ENCODE measurements at regions of chr17 and their contacts with region 1.

Region 1: GRCh38 chr17:50841949-50842354 is 6.6 kb downstream of the WFIKKN2 start:
- DNase-seq: peak; percentile 89

Region 2: DNA sequence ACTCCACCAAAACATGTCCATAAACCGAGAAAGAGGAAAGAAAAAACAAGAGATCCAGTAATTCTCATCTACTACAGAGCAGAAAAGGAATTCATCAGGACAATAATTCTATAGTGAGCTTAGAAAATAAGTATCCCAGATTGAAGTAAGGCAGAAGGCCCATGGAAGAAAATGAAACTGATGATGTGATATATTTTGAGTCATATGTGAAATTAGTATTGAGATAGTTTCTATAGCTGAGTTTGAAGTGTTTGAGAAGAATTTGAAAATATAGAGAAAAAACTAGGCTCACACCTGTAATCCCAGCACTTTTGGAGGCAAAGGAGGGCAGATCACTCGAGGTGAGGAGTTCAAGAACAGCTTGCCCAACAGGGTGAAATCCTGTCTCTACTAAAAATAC is 102.9 kb before region 1 on chr17:
- intact Hi-C with region 1: no loop called
- DNase-seq: no peak

Region 3: DNA sequence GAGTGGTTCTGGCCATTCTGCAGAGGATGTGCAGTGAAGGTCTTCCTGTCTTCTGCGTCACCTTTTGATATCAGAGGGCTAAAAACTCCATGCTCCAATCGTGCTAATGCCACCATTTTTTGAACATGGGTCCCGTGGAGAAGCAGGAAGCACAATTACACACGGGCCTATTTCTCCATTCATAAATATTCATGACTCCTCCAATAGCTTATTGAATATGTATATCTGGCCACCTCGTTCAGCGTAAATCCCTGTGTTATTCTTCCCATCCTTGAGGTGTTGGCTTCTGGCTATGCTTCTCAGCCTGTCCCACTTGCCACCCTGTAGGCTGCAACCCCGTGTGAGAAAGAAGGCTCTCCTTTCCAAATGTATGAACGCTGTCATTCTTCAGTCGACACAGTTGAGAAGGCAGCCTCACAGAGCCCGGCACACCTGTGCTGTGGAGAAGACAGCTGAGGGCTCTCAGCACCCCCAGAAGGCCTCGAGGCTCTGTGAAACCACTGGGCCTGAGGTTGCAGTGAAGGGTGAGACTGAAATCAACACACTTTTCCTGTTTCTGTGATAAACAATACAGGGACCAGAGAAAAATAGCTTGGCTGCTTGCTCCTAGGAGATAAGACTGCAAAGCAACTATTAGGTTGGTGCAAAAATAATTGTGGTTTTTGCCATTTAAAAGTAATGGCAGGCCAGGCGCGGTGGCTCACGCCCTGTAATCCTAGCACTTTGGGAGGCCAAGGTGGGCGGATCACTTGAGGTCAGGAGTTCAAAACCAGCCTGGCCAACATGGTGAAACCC is 69.8 kb before region 1 on chr17:
- intact Hi-C with region 1: no loop called
- DNase-seq: peak; percentile 52

Region 4: GRCh38 chr17:50783193-50783660 is 58.7 kb before region 1 on chr17:
- intact Hi-C with region 1: loop called (anchors 2 to 5 kb)
- DNase-seq: peak; percentile 95

Region 5: DNA sequence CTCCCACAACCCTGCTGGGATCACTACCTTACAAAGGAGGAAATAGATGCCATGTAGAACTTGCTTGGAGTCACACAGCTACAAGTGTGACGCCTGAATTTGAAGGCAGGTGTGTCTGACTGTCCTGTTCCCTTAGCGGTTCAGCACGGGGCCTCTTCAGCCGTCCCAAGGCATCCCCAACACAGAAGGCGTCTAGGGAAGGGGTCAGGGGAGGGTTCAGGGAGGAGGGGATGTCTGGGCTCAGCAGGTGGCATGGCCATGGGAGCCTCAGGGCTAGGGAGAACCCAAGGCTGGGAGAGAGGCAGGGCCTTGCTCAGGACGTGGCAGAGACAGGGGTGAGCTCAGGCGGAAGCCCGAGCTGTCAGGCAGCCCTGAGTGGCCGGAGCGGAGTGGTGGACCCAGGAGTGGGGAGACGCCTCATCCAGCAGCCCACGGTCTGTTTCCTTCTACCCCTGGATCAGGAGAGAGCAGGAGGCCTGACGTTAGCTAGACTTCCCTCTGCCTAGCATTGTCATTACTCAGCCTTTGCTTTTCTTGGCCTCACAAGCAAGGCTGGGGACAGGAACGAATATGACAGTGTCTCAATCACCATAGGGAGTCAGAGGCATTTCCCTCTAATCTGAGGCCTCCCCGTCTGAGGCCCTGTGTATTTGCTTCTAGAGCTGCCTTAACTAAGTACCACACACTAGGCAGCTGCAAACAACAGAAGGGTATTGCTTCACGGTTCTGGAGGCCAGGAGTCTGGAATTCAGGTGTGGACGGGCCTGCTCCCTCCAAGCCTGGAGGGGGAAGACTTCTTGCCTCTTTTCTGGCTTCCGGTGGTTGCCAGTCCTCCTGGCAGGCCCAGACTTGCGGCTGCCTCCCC is 43.3 kb before region 1 on chr17:
- intact Hi-C with region 1: no loop called
- DNase-seq: no peak

Region 6: DNA sequence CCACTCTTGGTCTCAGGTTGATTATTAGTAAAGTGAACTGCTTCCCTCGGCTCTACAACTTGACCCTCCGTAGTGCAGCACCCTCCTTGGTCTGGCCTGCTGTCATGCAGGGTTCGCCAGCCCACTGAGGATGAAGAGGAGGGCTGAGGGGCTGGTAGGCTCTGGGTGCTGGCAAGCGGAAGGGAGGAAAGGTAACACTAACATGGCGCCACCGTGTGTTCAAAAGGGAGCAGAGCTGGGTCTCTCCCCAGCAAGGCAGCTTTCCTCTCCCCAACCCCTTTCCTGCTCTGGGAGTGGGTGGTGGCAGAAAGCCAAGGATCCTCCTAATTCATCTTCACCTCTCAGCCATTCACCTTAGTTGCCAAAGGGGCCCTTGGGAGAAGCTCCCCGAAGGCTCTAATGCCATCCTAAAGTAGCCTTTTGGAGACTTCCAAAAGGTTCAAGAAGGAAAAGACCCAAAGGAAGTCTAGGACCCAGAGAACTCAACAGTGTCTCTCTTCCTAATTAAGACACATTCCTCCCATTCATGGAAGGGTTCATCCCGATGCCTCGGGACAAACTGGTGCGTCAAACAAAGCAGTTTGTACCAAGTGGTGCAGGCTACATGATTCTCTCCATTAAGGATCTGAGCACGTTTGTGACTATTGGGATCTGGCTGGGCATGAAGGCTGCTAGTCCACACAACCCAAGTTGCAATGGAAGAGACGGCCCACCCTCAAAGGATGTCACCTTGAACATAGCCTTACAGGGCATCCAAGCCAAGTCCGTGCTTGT is 115.0 kb after region 1 on chr17:
- intact Hi-C with region 1: no loop called
- DNase-seq: peak; percentile 46